Caco-2 (cell line): ENCODE measurements at regions of chr12 and their contacts with region 1.

Region 1: DNA sequence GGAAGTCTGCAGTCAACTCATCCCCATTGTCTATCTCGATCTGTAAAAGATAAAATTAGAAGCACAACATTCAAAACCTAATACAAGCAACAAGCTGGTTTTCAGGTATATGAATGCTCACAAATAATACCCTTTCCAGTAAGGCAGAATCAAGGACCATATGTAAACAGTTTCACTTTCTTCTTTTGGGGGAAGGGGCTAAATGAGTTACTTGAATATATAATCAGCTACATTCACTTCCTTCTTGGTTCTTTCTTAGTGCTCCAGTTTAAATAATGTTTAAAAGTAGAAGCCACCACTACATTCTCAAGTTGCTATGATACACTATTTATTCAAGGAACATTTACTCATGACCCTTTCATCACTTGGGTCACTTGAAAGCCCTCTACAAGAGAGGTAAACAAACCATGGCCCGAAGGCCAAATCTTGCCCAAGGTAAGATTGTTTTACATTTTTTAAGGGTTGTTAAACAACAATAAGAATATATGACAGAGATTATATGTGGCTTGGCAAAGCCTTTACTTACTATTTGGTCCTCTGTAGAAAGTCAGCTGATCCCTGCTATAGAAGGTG is 10.3 kb downstream of the TWF1 start:
- DNase-seq: peak; percentile 46 to 72
- H3K4me3 ChIP-seq: no peak overlapping the region
- H3K4me3 Mint-ChIP-seq: no peak overlapping the region
- H3K27ac Mint-ChIP-seq: peak overlapping the region; percentile 70
- H3K4me1 ChIP-seq: peaks cover 19% of the 10 kb centered on the region
- H3K4me1 Mint-ChIP-seq: peaks cover 26% of the 10 kb centered on the region
- H3K27me3 ChIP-seq: no peaks in the 10 kb centered on the region
- H3K27me3 Mint-ChIP-seq: no peaks in the 10 kb centered on the region
- CTCF ChIP-seq: no peak

Region 2: DNA sequence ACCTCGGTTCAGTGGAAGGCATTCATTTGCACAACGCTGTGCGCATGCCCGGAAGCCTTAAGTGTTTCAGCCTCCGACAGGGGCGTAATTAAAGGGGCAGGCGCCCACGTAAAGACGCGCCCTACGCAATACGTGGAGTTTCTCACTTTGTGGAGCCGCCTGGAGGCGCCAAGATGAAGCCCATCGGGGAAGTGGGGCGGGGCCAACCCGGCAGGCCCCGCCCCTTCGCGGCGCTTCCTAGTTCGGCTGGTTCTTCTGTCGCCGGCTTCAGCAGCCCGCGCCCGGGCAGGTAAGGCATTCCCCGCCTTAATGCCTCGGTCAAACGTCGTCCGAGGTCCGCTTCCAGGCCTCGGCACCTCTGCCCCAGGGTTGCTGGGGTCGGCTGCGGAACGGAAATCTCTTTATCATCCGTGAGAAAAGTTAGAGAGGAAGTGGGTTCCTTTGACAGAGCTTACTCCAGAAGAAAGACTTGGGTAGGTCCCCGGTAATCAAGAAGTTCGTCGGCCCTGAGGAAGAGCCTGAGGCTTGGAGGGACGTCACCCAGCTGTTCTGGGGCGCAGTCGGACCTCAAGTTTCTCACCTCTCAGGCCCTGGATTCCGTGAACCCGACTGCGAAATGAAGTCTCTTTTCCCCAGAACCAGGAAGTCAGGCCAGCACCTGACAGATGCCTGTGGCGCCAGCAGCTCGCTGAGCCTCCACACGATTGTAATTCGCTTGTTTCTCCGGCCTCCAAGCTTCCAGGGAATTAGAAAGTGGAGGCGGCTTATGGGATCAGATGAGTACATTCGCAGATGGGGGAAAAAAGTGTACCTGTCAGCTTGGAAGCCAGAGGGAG is 36.9 kb before region 1 on chr12 and contains the starts of genes IRAK4 and PUS7L:
- CTCF ChIA-PET with region 1: no interaction called
- POLR2A ChIA-PET with region 1: interaction called, 3 read pairs
- intact Hi-C with region 1: loop called (anchors 2 kb)
- DNase-seq: peak; percentile 96 to 97
- H3K4me3 ChIP-seq: peak within 1 kb of the TSS; percentile 58
- H3K4me3 Mint-ChIP-seq: peak within 1 kb of the TSS; percentile 85
- H3K27ac Mint-ChIP-seq: peak within 1 kb of the TSS; percentile 95
- H3K4me1 ChIP-seq: no peaks in the 10 kb centered on the region; the same call in 1 of the 2 replicates
- H3K4me1 Mint-ChIP-seq: peaks cover 28% of the 10 kb centered on the region
- H3K27me3 ChIP-seq: no peaks in the 10 kb centered on the region
- H3K27me3 Mint-ChIP-seq: no peaks in the 10 kb centered on the region
- CTCF ChIP-seq: peak; percentile 23 to 57
- total RNA-seq, gene IRAK4: 11.7 and 15.3 TPM in 2 replicates
- total RNA-seq, gene PUS7L: 29.1 and 36.0 TPM in 2 replicates

Region 3: GRCh38 chr12:43776498-43776897 is 19.3 kb before region 1 on chr12:
- CTCF ChIA-PET with region 1: no interaction called
- POLR2A ChIA-PET with region 1: no interaction called
- intact Hi-C with region 1: no loop called
- DNase-seq: peak in 1 of 2 experiments; percentile 59
- H3K4me3 ChIP-seq: no peak overlapping the region
- H3K4me3 Mint-ChIP-seq: no peak overlapping the region
- H3K27ac Mint-ChIP-seq: no peak overlapping the region
- H3K4me1 ChIP-seq: no peaks in the 10 kb centered on the region
- H3K4me1 Mint-ChIP-seq: no peaks in the 10 kb centered on the region
- H3K27me3 ChIP-seq: no peaks in the 10 kb centered on the region
- H3K27me3 Mint-ChIP-seq: no peaks in the 10 kb centered on the region
- CTCF ChIP-seq: peak; percentile 69 to 83